ENCODE measurements at regions of chr17 and their contacts with region 1.

Region 1: DNA sequence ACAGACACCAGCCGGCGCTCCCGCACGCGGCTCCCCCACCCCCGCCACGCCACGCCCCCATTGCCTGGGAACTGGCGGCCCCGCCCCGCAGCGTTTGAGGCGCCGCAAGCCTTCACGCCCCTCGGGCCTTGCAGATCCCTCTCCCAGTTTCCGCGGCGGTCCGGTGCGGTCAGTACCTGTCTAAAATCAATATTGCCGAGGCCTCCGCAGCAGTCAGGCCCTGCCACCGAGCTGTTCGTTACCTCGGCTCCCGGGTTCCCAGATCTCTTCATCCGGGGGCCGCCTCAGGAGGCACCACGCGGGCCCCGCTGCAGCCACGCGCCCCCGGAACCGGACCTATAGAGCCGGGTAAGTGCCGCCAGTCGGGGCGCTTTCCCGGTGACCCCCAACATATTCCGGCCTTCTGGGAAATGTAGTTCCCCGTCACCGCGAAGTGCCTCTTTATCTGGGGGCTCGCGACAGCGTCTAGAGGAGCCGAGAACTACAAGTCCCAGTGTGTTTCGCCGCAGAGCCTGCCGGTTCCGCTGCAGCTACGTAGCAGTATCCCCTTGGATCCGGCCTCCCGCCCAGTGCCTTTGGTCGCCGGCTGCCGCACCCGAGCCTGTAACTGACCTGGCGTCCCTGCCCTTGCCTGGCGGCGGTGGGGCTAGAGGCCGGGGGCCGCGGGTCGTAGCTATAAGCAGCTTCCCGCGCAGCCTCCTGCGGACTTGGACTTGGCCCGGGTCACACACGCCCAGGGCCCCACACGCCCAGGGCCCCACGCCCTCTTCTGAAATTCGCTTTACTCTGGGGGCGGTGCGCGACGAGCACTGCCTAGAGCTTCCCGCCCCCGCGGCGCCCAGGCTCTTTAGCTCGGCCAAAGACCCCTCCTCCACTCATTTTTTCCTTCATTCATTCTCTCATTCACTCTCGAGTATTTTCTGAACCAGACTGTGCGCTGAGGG is at the start of gene PEMT:
- DNase-seq: peak; percentile 96

Region 2: GRCh38 chr17:17580662-17581470 is 10.8 kb before region 1 on chr17:
- CTCF ChIA-PET with region 1: no interaction called
- POLR2A ChIA-PET with region 1: interaction called, 35 read pairs
- DNase-seq: no peak

Region 3: GRCh38 chr17:17605729-17606088 is 14.1 kb after region 1 on chr17:
- CTCF ChIA-PET with region 1: interaction called, 5 read pairs
- POLR2A ChIA-PET with region 1: interaction called, 14 read pairs
- DNase-seq: no peak

Region 4: DNA sequence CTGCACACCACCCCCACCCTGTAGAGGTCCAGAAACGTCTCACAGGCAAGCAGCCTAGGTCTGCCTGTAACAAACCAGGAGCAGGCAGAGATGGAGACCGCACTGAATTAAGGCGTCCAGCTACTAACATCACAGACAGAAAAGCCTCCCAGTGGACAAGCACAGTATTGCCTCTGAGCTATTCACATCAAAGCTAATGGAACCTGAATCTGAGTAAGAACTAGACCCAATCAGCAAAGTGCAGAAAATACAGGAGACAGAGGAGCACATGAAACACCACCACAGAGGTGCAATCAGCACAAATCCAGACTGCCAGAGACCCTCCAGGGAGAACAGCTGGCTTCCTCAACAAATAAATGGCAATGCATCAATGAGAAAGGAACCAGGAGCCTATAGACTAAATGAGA is 22.1 kb after region 1 on chr17:
- CTCF ChIA-PET with region 1: interaction called, 16 read pairs
- POLR2A ChIA-PET with region 1: interaction called, 21 read pairs
- DNase-seq: peak; percentile 79

Measured in HEK293T (cell line).